Endothelial cell of umbilical vein (primary cell): ENCODE measurements at regions of chr4 and their contacts with region 1.

Region 1: GRCh38 chr4:13548984-13549546 is 4.8 kb upstream of the NKX3-2 start:
- DNase-seq: peak; percentile 75
- H3K4me3 ChIP-seq: peak overlapping the region in 2 of 3 experiments; percentile 25 to 49
- H3K27ac ChIP-seq: no peak overlapping the region
- H3K4me1 ChIP-seq: peaks cover 8% of the 10 kb centered on the region
- H3K27me3 ChIP-seq: peaks cover 29 to 67% of the 10 kb centered on the region in 2 experiments
- CTCF ChIP-seq: peak; percentile 74 to 82
- POLR2A ChIP-seq: no peak

Region 2: DNA sequence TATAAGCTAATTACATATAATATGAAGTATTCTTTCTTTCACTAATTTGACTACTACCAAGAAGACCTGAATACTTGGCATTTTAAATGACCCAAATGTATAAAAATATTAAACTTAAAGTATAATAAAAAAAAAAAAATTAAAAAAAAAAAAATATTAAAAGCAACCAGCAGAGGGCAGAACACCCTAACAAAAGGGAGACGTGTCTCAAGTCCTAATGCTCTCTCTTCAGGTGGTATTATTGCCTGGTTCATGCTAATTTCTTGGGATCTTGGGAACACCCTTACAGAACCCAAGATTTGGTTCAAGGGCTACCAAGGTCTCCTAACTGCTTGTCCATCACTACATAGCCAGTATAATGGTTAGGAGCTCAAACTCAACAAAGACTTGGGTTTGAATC is 819.7 kb before region 1 on chr4:
- CTCF ChIA-PET with region 1: interaction called, 27 read pairs
- POLR2A ChIA-PET with region 1: no interaction called
- dilution Hi-C with region 1: no loop called
- intact Hi-C with region 1: loop called (anchors 1 kb)
- DNase-seq: peak; percentile 25
- H3K4me3 ChIP-seq: no peak overlapping the region
- H3K27ac ChIP-seq: no peak overlapping the region
- H3K4me1 ChIP-seq: no peaks in the 10 kb centered on the region
- H3K27me3 ChIP-seq: no peaks in the 10 kb centered on the region
- CTCF ChIP-seq: peak in 1 of 2 donors; percentile 34
- POLR2A ChIP-seq: no peak

Region 3: GRCh38 chr4:12852338-12853307 is 696.4 kb before region 1 on chr4:
- CTCF ChIA-PET with region 1: interaction called, 27 read pairs
- POLR2A ChIA-PET with region 1: no interaction called
- dilution Hi-C with region 1: no loop called
- intact Hi-C with region 1: loop called (anchors 1 kb)
- DNase-seq: peak; percentile 49
- H3K4me3 ChIP-seq: no peak overlapping the region
- H3K27ac ChIP-seq: no peak overlapping the region
- H3K4me1 ChIP-seq: no peaks in the 10 kb centered on the region
- H3K27me3 ChIP-seq: no peaks in the 10 kb centered on the region
- CTCF ChIP-seq: peak in 1 of 2 donors; percentile 25
- POLR2A ChIP-seq: no peak

Region 4: DNA sequence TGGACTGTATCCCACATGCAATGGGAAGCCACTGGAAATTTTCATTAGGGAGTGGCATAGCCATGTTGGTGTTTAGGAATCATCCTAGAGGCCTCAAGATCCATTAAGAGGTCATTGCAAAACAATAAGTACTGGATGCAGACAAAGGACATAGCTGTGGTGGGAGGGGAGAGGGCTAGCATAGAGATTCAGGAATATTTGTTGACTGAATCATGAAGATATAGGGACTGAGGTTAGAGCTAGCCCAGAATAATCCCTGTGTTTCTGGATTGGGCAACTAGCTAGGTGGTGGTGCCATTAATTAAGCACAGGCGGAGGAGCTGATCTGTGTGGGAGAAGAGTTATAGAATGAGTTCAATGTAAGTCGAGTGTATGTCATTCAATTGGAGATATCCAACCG is 200.0 kb before region 1 on chr4:
- CTCF ChIA-PET with region 1: no interaction called
- POLR2A ChIA-PET with region 1: no interaction called
- dilution Hi-C with region 1: no loop called
- intact Hi-C with region 1: no loop called
- DNase-seq: no peak
- H3K4me3 ChIP-seq: no peak overlapping the region
- H3K27ac ChIP-seq: no peak overlapping the region
- H3K4me1 ChIP-seq: no peaks in the 10 kb centered on the region
- H3K27me3 ChIP-seq: no peaks in the 10 kb centered on the region
- CTCF ChIP-seq: no peak
- POLR2A ChIP-seq: no peak

Region 5: DNA sequence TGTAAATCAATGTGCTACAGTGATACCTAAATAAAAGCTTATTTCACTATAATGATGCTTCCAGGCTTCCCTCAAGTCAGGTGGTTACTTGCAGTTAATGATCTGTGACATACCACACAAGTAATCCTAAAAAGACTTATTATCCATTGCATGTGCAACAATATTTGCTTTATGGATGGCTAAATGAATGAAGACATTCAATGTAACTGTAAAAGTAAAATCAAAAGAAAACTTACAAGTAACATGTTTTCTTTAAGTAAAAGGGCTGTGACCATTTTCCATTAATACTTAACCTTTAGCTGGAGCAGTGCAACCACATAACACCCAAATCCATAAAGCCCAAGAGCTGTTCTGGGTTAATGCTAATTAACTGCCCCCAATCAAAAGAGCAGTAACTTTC is 107.6 kb before region 1 on chr4:
- CTCF ChIA-PET with region 1: no interaction called
- POLR2A ChIA-PET with region 1: no interaction called
- dilution Hi-C with region 1: no loop called
- intact Hi-C with region 1: no loop called
- DNase-seq: no peak
- H3K4me3 ChIP-seq: no peak overlapping the region
- H3K27ac ChIP-seq: no peak overlapping the region
- H3K4me1 ChIP-seq: no peaks in the 10 kb centered on the region
- H3K27me3 ChIP-seq: no peaks in the 10 kb centered on the region
- CTCF ChIP-seq: no peak
- POLR2A ChIP-seq: no peak

Region 6: GRCh38 chr4:13484122-13484748 is 64.8 kb before region 1 on chr4 and contains the start of gene RAB28:
- CTCF ChIA-PET with region 1: interaction called, 3 read pairs
- POLR2A ChIA-PET with region 1: no interaction called
- dilution Hi-C with region 1: no loop called
- intact Hi-C with region 1: loop called (anchors 1 kb)
- DNase-seq: peak; percentile 93
- H3K4me3 ChIP-seq: peak within 1 kb of the TSS; percentile 64 to 82 (median 66)
- H3K27ac ChIP-seq: peak within 1 kb of the TSS; percentile 97
- H3K4me1 ChIP-seq: peaks cover 11% of the 10 kb centered on the region
- H3K27me3 ChIP-seq: peaks cover 4 to 15% of the 10 kb centered on the region in 2 experiments
- CTCF ChIP-seq: no peak
- POLR2A ChIP-seq: no peak
- total RNA-seq, gene RAB28: 13.2 and 15.5 TPM in 2 replicates